Endothelial cell of umbilical vein (primary cell): ENCODE measurements at regions of chr5 and their contacts with region 1.

Region 1: GRCh38 chr5:133111299-133111698 is 59.5 kb downstream of the HSPA4 start:
- DNase-seq: peak; percentile 83
- H3K4me3 ChIP-seq: no peak overlapping the region
- H3K27ac ChIP-seq: no peak overlapping the region
- H3K4me1 ChIP-seq: no peaks in the 10 kb centered on the region
- H3K27me3 ChIP-seq: no peaks in the 10 kb centered on the region
- CTCF ChIP-seq: peak; percentile 83 to 84
- POLR2A ChIP-seq: no peak

Region 2: GRCh38 chr5:133260715-133261114 is 149.4 kb after region 1 on chr5:
- CTCF ChIA-PET with region 1: interaction called, 17 read pairs
- POLR2A ChIA-PET with region 1: no interaction called
- dilution Hi-C with region 1: no loop called
- intact Hi-C with region 1: no loop called
- DNase-seq: no peak
- H3K4me3 ChIP-seq: no peak overlapping the region
- H3K27ac ChIP-seq: no peak overlapping the region
- H3K4me1 ChIP-seq: no peaks in the 10 kb centered on the region
- H3K27me3 ChIP-seq: peaks cover 2 to 11% of the 10 kb centered on the region in 2 experiments
- CTCF ChIP-seq: peak in 1 of 2 donors; percentile 8
- POLR2A ChIP-seq: no peak

Region 3: DNA sequence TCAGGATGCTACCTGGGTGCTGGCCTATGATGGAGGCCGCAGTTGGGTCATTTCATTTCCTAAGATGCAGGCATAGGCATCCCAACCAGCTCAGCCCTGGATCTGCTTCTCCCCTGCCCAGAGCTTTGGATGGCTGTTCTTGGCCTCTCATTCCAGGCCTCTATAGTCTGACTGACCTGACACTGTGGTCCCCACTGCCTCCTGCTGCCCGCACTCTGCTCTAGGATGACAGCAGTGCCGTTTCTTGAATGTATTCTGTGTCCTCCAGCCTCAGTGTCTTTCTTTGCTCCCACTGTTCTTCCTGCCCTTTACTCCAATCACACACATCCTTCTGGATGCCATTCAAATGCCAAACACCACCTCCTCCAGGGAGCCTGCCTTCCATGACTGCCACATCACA is 176.2 kb after region 1 on chr5:
- CTCF ChIA-PET with region 1: interaction called, 131 read pairs
- POLR2A ChIA-PET with region 1: no interaction called
- dilution Hi-C with region 1: no loop called
- intact Hi-C with region 1: loop called (anchors 1 kb)
- DNase-seq: peak; percentile 52
- H3K4me3 ChIP-seq: no peak overlapping the region
- H3K27ac ChIP-seq: no peak overlapping the region
- H3K4me1 ChIP-seq: no peaks in the 10 kb centered on the region
- H3K27me3 ChIP-seq: no peaks in the 10 kb centered on the region
- CTCF ChIP-seq: peak; percentile 47 to 77
- POLR2A ChIP-seq: no peak

Region 4: GRCh38 chr5:133944263-133945185 is 833.2 kb after region 1 on chr5:
- CTCF ChIA-PET with region 1: interaction called, 3 read pairs
- POLR2A ChIA-PET with region 1: no interaction called
- dilution Hi-C with region 1: no loop called
- intact Hi-C with region 1: loop called (anchors 5 kb)
- DNase-seq: peak; percentile 53
- H3K4me3 ChIP-seq: no peak overlapping the region
- H3K27ac ChIP-seq: no peak overlapping the region
- H3K4me1 ChIP-seq: no peaks in the 10 kb centered on the region
- H3K27me3 ChIP-seq: no peaks in the 10 kb centered on the region
- CTCF ChIP-seq: peak; percentile 79
- POLR2A ChIP-seq: no peak